Psoas muscle (tissue), 8 donors: ENCODE measurements at regions of chr15 and their contacts with region 1.

Region 1: DNA sequence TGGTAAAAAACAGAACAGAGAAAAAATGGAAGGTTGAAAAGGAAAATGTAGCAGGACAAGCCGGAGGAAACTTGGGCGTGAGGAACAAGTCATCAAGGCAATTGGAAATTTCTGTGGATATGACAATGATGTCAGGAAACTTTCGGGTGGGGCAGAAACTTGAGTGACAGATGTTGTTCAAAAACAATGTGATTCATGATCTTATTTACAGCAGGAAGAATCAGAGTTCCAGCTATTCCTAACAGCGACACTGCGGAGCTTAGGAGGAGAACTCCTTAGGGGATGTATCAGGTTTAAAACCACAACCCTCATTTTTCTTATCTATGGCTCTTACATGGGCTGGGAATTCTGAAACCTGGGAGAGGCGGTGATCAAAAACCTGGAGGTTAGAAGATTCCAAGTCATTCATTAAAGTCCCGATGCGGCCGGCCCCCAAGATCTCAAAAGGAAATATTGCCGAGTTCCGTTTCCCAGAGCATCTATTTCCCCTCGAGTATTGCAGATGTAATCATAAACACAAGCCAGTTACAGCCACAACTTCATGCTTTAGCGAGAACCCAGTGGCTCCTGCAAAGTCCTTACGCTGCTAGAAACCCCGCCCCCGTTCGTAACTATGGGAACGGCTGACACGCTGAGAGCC is 659 bp upstream of the ARRDC4 start:
- DNase-seq: no peak
- ATAC-seq: peak in 3 of 4 donors; percentile 7 to 36 (median 29)
- H3K4me3 ChIP-seq: peak overlapping the region; percentile 94
- H3K27ac ChIP-seq: peak overlapping the region; percentile 95
- H3K4me1 ChIP-seq: peaks cover 11% of the 10 kb centered on the region
- H3K27me3 ChIP-seq: no peaks in the 10 kb centered on the region
- CTCF ChIP-seq: no peak

Region 2: DNA sequence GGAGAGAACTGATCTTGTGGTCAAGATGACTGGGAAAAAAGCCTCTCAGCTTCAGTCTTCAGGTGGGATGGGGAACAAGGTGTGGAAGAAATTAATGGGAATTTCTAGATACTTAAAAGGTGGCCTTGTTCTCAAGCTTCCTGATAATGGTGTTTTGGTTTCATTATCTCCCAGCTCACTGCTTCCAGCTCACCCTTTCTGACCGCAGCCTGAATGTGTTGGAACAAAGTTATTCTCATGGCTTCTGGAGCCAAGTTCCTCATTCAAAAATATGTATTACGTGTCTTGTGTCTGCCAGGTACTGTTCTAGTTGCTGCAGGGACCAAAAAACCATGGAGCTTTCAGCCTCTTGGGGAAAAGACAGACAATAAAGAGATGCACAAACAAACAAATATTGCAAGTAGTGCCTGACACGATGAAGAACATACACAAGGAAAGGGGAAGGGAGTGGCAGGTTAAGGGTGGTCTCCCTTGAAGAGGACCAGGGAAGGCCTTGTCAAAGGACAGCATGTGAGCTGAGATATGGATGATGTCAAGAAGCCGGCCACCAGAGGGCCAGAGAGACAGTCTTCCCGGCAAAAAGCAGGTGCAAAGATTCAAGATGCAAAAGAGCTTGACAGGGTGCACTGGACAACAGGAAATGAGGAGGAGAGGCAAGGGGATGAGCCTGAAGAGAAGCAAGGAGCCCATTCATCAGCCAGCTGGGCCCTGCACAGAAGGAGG is 36.2 kb after region 1 on chr15:
- intact Hi-C with region 1: loop called in 1 of 2 experiments (anchors 5 kb)
- DNase-seq: no peak
- ATAC-seq: no peak
- H3K4me3 ChIP-seq: no peak overlapping the region
- H3K27ac ChIP-seq: no peak overlapping the region
- H3K4me1 ChIP-seq: peaks cover 11% of the 10 kb centered on the region
- H3K27me3 ChIP-seq: no peaks in the 10 kb centered on the region
- CTCF ChIP-seq: peak; percentile 24